ENCODE measurements at regions of chr6 and their contacts with region 1.

Region 1: GRCh38 chr6:10954590-10955010 is 67.7 kb downstream of the SYCP2L start:
- DNase-seq: peak; percentile 89
- H3K4me3 ChIP-seq: no peak overlapping the region
- H3K27ac ChIP-seq: no peak overlapping the region
- H3K4me1 ChIP-seq: no peaks in the 10 kb centered on the region
- H3K27me3 ChIP-seq: no peaks in the 10 kb centered on the region
- CTCF ChIP-seq: peak; percentile 68 to 77 (median 72)
- POLR2A ChIP-seq: no peak

Region 2: GRCh38 chr6:10146723-10147451 is 807.7 kb before region 1 on chr6:
- intact Hi-C with region 1: no loop called
- DNase-seq: peak; percentile 61
- H3K4me3 ChIP-seq: peak overlapping the region in 1 of 2 donors; percentile 15
- H3K27ac ChIP-seq: no peak overlapping the region
- H3K4me1 ChIP-seq: no peaks in the 10 kb centered on the region
- H3K27me3 ChIP-seq: no peaks in the 10 kb centered on the region
- CTCF ChIP-seq: no peak
- POLR2A ChIP-seq: no peak

Region 3: DNA sequence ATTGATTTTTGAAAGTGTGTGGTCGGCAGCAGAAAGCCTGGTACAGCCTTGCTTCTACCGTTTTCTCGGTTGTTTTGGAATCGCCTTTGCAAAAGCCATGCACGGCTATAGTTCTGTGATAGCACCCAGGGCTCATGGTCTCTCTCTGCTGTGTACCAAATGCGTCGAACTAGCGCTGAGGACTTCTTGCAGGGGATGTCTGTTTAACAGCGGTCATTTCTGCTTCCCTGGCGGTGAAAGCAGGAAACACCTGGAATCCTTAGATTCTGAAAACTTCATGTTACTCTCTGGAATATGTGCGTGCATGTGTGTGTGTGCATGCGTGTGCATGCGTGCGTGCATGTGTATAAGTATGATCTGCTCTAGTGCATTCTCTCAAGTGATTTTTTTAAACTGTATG is 459.6 kb before region 1 on chr6:
- intact Hi-C with region 1: no loop called
- DNase-seq: no peak
- H3K4me3 ChIP-seq: no peak overlapping the region
- H3K27ac ChIP-seq: no peak overlapping the region
- H3K4me1 ChIP-seq: no peaks in the 10 kb centered on the region
- H3K27me3 ChIP-seq: no peaks in the 10 kb centered on the region
- CTCF ChIP-seq: no peak
- POLR2A ChIP-seq: no peak

Region 4: GRCh38 chr6:11009353-11009752 is 54.8 kb after region 1 on chr6:
- intact Hi-C with region 1: no loop called
- DNase-seq: no peak
- H3K4me3 ChIP-seq: no peak overlapping the region
- H3K27ac ChIP-seq: no peak overlapping the region
- H3K4me1 ChIP-seq: no peaks in the 10 kb centered on the region
- H3K27me3 ChIP-seq: no peaks in the 10 kb centered on the region
- CTCF ChIP-seq: no peak
- POLR2A ChIP-seq: no peak

Region 5: GRCh38 chr6:11064836-11065235 is 110.2 kb after region 1 on chr6:
- intact Hi-C with region 1: loop called (anchors 10 kb)
- DNase-seq: no peak
- H3K4me3 ChIP-seq: no peak overlapping the region
- H3K27ac ChIP-seq: no peak overlapping the region
- H3K4me1 ChIP-seq: no peaks in the 10 kb centered on the region
- H3K27me3 ChIP-seq: no peaks in the 10 kb centered on the region
- CTCF ChIP-seq: no peak
- POLR2A ChIP-seq: no peak